CD4-positive, alpha-beta memory T cell (primary cell): ENCODE measurements at regions of chr13 and their contacts with region 1.

Region 1: DNA sequence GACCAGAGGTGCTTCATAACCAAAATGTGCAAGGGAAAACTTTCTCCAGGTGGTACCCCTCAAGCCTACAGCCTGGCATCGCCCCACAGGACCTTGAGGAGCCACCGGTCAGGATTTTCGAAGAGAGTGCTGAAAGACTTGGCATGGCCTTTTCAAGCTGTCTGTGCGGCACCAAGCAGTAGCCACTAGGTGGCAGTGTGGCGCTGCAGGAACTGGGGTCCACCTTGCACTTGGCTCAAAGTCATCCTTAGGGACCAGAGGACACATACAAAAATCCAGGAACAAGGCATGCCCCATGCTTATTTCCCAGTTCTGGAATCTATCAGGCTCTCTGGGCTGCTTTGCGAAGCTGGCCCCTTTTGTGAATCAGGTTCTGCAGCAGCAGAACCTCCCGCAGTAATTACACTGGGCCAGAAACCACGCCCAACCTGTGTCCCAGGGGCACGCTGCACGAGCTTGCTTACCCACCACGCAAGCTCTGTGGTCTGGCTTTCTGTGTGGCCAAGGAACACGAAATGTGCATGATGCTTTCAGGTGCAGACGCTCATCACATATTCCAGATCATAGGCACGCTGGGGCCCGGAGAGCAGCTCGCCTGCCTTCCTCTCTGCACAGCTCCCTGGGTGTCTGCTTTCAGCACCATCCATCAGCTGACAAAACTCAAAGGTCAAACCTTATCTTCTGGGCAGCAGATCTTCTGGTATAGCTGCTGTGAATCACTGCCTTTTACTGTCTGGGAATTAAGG is 87.2 kb downstream of the SLC7A1 start:
- DNase-seq: peak; percentile 52 to 65 (median 55)
- H3K4me3 ChIP-seq: no peak overlapping the region
- H3K4me3 Mint-ChIP-seq: no peak overlapping the region
- H3K27ac ChIP-seq: no peak overlapping the region
- H3K27ac Mint-ChIP-seq: peak overlapping the region in 1 of 7 donors; percentile 24
- H3K4me1 ChIP-seq: no peaks in the 10 kb centered on the region
- H3K4me1 Mint-ChIP-seq: peaks cover 0 to 4% (median 0%) of the 10 kb centered on the region in 4 donors
- H3K27me3 ChIP-seq: no peaks in the 10 kb centered on the region
- H3K27me3 Mint-ChIP-seq: peaks cover 0 to 6% of the 10 kb centered on the region in 2 donors

Region 2: DNA sequence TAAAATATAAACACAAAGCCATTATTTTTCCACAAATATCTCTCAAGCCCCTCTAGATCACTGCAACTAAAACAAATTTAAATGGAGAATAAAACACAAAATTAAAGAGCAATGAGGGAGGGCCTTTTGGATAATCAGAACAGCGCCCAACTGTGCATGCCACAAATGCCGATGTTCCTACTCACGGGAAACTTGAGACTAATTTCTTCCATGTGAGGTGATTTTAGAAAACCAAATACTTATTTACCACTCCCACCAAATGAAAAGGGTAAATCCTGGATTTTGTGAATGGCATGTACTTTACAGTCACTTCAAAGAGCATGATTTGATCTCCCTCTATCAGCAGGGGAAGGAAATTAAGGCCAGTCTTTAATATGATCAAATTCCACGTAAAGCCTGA is 12.4 kb after region 1 on chr13:
- CTCF ChIA-PET with region 1: interaction called, 38 read pairs
- POLR2A ChIA-PET with region 1: interaction called, 4 read pairs
- intact Hi-C with region 1: no loop called
- DNase-seq: no peak
- H3K4me3 ChIP-seq: no peak overlapping the region
- H3K4me3 Mint-ChIP-seq: no peak overlapping the region
- H3K27ac ChIP-seq: no peak overlapping the region
- H3K27ac Mint-ChIP-seq: no peak overlapping the region
- H3K4me1 ChIP-seq: no peaks in the 10 kb centered on the region
- H3K4me1 Mint-ChIP-seq: no peaks in the 10 kb centered on the region
- H3K27me3 ChIP-seq: no peaks in the 10 kb centered on the region
- H3K27me3 Mint-ChIP-seq: no peaks in the 10 kb centered on the region

Region 3: GRCh38 chr13:29595380-29596063 is 87.2 kb after region 1 on chr13 and contains the start of gene SLC7A1:
- CTCF ChIA-PET with region 1: interaction called, 7 read pairs
- POLR2A ChIA-PET with region 1: no interaction called
- intact Hi-C with region 1: loop called (anchors 5 kb)
- DNase-seq: peak; percentile 80 to 90 (median 88)
- H3K4me3 ChIP-seq: peak within 1 kb of the TSS; percentile 59 to 61
- H3K4me3 Mint-ChIP-seq: peak within 1 kb of the TSS; percentile 87 to 94 (median 92)
- H3K27ac ChIP-seq: peak within 1 kb of the TSS; percentile 66
- H3K27ac Mint-ChIP-seq: peak within 1 kb of the TSS; percentile 90 to 97 (median 93)
- H3K4me1 ChIP-seq: peaks cover 25% of the 10 kb centered on the region
- H3K4me1 Mint-ChIP-seq: peaks cover 22 to 49% (median 34%) of the 10 kb centered on the region in 4 donors
- H3K27me3 ChIP-seq: no peaks in the 10 kb centered on the region
- H3K27me3 Mint-ChIP-seq: peaks cover 0 to 1% of the 10 kb centered on the region in 2 donors
- total RNA-seq, gene SLC7A1: 38.6 to 42.6 TPM

Region 4: DNA sequence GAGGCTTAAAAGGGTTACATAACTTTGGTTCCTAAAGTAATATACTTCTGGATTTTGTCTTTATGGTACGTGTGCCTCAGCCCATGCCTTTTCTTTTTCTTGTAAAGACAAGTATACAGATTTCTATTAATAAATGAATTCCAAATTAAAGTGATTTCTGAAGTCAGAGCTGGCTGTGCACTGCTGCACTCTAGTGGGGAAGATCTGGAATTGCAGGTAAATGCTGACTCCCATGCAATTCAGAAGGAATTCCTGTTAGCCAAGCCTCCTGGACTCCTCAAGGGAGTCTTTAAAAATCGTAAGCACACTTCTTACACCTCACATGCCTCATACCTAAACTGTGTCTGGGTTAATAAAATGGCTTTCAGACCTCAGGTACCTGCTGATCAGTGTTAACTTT is 205.5 kb after region 1 on chr13:
- CTCF ChIA-PET with region 1: interaction called, 162 read pairs
- POLR2A ChIA-PET with region 1: interaction called, 4 read pairs
- intact Hi-C with region 1: no loop called
- DNase-seq: no peak
- H3K4me3 ChIP-seq: no peak overlapping the region
- H3K4me3 Mint-ChIP-seq: no peak overlapping the region
- H3K27ac ChIP-seq: no peak overlapping the region
- H3K27ac Mint-ChIP-seq: no peak overlapping the region
- H3K4me1 ChIP-seq: no peaks in the 10 kb centered on the region
- H3K4me1 Mint-ChIP-seq: peaks cover 0 to 4% (median 0%) of the 10 kb centered on the region in 4 donors
- H3K27me3 ChIP-seq: no peaks in the 10 kb centered on the region
- H3K27me3 Mint-ChIP-seq: peaks cover 14 to 21% of the 10 kb centered on the region in 2 donors